ENCODE measurements at regions of chr10 and their contacts with region 1.

Region 1: GRCh38 chr10:117537436-117537903 is 5.1 kb upstream of the EMX2 start:
- DNase-seq: no peak
- ATAC-seq: peak; percentile 88
- H3K4me3 ChIP-seq: no peak overlapping the region
- H3K27ac ChIP-seq: no peak overlapping the region
- H3K4me1 ChIP-seq: peaks cover 0 to 6% of the 10 kb centered on the region in 2 experiments; a peak in 1 of 4 replicates
- H3K27me3 ChIP-seq: peaks cover 18% of the 10 kb centered on the region
- CTCF ChIP-seq: peak; percentile 46 to 85 (median 79)
- POLR2A ChIP-seq: no peak
- RAD21 ChIP-seq: peak; percentile 83

Region 2: GRCh38 chr10:117684672-117685271 is 147.3 kb after region 1 on chr10:
- CTCF ChIA-PET with region 1: no interaction called
- POLR2A ChIA-PET with region 1: no interaction called
- RAD21 ChIA-PET with region 1: no interaction called
- intact Hi-C with region 1: loop called (anchors 1 kb)
- DNase-seq: no peak
- ATAC-seq: peak; percentile 50
- H3K4me3 ChIP-seq: no peak overlapping the region
- H3K27ac ChIP-seq: no peak overlapping the region
- H3K4me1 ChIP-seq: peaks cover 2 to 16% of the 10 kb centered on the region in 2 experiments; a peak in 1 of 4 replicates
- H3K27me3 ChIP-seq: peaks cover 6% of the 10 kb centered on the region; the same call in 1 of the 2 replicates
- CTCF ChIP-seq: peak; percentile 37 to 51 (median 43); a peak in 5 of 6 replicates
- POLR2A ChIP-seq: no peak
- RAD21 ChIP-seq: peak; percentile 59

Region 3: GRCh38 chr10:117757086-117757720 is 219.7 kb after region 1 on chr10:
- CTCF ChIA-PET with region 1: no interaction called
- POLR2A ChIA-PET with region 1: no interaction called
- RAD21 ChIA-PET with region 1: no interaction called
- intact Hi-C with region 1: loop called (anchors 10 kb)
- DNase-seq: no peak
- ATAC-seq: no peak
- H3K4me3 ChIP-seq: no peak overlapping the region
- H3K27ac ChIP-seq: no peak overlapping the region
- H3K4me1 ChIP-seq: no peaks in the 10 kb centered on the region
- H3K27me3 ChIP-seq: peaks cover 38% of the 10 kb centered on the region
- CTCF ChIP-seq: no peak
- POLR2A ChIP-seq: no peak
- RAD21 ChIP-seq: no peak

Region 4: GRCh38 chr10:118106426-118106825 is 569.0 kb after region 1 on chr10:
- CTCF ChIA-PET with region 1: interaction called, 3 read pairs
- POLR2A ChIA-PET with region 1: no interaction called
- RAD21 ChIA-PET with region 1: no interaction called
- intact Hi-C with region 1: loop called (anchors 5 kb)
- DNase-seq: peak; percentile 8
- ATAC-seq: peak; percentile 87
- H3K4me3 ChIP-seq: no peak overlapping the region
- H3K27ac ChIP-seq: no peak overlapping the region
- H3K4me1 ChIP-seq: no peaks in the 10 kb centered on the region
- H3K27me3 ChIP-seq: no peaks in the 10 kb centered on the region
- CTCF ChIP-seq: peak; percentile 51 to 71 (median 69); a peak in 5 of 6 replicates
- POLR2A ChIP-seq: no peak
- RAD21 ChIP-seq: peak; percentile 71